ENCODE measurements at regions of chr11 and their contacts with region 1.

Region 1: GRCh38 chr11:113213549-113213948 is 100.8 kb upstream of the TTC12 start:
- DNase-seq: no peak
- ATAC-seq: no peak

Region 2: GRCh38 chr11:113249491-113249763 is 35.9 kb after region 1 on chr11:
- intact Hi-C with region 1: loop called (anchors 5 kb)
- DNase-seq: no peak
- ATAC-seq: peak; percentile 29

Measured in Right ventricle myocardium inferior (tissue), 1 donor.